ENCODE measurements at regions of chr13 and their contacts with region 1.

Region 1: DNA sequence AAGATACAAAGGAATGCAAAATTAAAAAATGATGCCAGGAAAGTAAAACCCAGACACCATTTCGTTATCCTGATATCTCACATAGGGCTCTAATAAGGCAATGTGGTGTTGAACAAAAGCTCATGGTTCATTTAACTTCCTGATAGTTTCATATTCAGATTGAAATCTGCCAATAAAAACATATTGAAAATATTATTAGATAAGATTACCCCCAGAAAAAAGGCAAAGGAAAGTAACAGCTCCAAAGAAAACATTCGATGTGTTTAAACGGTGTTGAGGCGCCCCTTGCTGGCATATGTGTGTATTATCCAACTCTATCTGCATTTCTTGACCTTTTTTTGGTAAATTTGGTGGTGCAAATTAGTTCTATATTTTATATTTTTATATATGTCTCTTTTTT is 75.9 kb downstream of the ESD start:
- DNase-seq: peak; percentile 65
- H3K4me3 ChIP-seq: no peak overlapping the region
- H3K27ac ChIP-seq: no peak overlapping the region
- H3K4me1 ChIP-seq: no peaks in the 10 kb centered on the region
- H3K27me3 ChIP-seq: no peaks in the 10 kb centered on the region
- CTCF ChIP-seq: peak; percentile 58 to 69 (median 59)
- POLR2A ChIP-seq: no peak

Region 2: DNA sequence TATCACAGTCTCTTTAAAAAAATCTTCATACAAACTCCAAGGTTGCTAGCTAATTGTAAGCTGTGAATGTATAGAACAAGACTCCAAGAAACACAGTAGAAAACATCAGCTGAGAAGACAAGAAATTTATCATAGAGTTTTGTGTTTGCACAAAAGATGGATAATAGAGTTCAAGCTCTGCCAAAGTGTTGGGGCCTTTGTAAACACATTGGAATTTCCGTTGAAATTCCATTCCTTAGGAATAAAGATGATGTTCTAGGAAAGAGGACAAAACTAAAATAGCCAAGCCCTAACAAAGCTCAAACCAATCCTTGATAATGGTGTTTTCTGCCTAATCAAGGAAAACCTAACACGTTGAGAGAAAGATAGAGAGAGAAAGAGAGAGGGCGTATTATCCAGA is 488.8 kb before region 1 on chr13:
- intact Hi-C with region 1: no loop called
- DNase-seq: no peak
- H3K4me3 ChIP-seq: no peak overlapping the region
- H3K27ac ChIP-seq: no peak overlapping the region
- H3K4me1 ChIP-seq: no peaks in the 10 kb centered on the region
- H3K27me3 ChIP-seq: no peaks in the 10 kb centered on the region
- CTCF ChIP-seq: no peak
- POLR2A ChIP-seq: no peak

Region 3: DNA sequence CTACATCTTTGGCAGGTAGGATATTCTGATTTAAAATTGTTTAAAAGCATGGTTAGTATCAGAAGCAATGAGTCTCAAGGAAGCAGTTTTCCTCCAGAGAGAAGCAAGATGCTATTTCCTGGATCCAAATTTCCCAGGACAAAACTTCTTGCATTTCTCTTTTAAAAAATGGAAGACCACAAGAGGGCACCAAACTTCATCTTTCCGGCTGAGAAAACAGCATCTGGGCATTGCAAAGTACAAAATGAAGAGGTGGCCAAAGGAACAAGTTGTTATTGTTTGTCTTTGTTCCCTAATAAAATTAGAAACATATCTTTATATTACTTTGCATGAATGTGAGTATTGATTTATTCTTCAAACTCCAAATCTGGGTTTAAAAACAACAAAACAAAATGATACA is 228.1 kb before region 1 on chr13:
- intact Hi-C with region 1: loop called (anchors 10 kb)
- DNase-seq: no peak
- H3K4me3 ChIP-seq: no peak overlapping the region
- H3K27ac ChIP-seq: no peak overlapping the region
- H3K4me1 ChIP-seq: no peaks in the 10 kb centered on the region
- H3K27me3 ChIP-seq: no peaks in the 10 kb centered on the region
- CTCF ChIP-seq: peak; percentile 45 to 65 (median 54)
- POLR2A ChIP-seq: no peak

Region 4: DNA sequence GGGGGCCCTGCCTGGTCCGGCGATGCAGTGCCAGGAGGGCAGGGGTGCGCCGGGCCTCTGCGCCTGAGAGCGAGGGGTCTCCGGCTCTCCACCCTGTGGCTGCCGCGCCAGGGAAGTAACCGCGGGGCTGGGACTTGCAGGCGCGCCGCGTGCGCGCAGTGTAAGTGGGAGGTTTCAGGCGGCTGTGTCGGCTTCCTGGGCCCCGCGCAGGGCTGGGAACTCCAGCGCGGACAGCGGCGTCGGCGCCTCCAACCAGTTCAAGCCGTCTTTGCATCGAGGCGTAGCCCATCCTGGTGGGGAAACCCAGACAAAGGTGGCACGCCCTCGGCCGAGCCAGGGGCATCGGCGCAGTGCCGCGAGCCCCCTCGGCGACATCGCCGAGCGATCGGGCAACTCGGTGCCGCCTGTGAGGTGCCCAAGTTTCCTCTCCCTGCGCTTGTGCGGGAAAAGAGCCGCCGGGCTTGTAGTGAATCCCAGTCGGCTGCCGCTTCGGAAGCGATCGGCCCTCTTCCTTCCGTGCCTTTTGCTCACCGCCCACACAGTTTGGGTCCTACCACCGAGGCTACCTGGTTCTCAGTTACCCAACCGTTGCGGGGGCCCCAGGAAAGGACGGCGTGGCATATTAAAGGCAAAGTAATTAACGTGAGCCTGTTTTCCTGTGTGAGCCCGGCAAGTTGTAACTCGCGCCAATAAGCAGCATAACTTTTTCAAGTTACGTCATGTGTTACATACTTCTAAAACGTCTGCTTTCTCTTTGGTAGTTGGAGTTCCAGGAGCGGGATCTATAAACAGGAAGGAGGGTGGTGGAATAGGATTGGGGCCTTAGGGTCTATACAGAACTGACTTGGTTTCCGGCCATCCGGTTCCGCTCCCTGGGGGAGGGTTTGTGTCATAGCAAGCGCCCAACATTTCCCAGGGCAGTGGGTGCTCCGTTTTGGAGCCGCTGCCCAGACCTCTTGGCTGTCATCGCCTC is 166.9 kb before region 1 on chr13:
- intact Hi-C with region 1: loop called (anchors 5 kb)
- DNase-seq: peak; percentile 81
- H3K4me3 ChIP-seq: peak overlapping the region; percentile 81 to 89
- H3K27ac ChIP-seq: peak overlapping the region; percentile 87 to 92
- H3K4me1 ChIP-seq: peaks cover 12% of the 10 kb centered on the region
- H3K27me3 ChIP-seq: no peaks in the 10 kb centered on the region
- CTCF ChIP-seq: peak; percentile 14 to 16 (median 14)
- POLR2A ChIP-seq: no peak

Region 5: GRCh38 chr13:47332149-47332548 is 611.1 kb after region 1 on chr13:
- intact Hi-C with region 1: no loop called
- DNase-seq: no peak
- H3K4me3 ChIP-seq: no peak overlapping the region
- H3K27ac ChIP-seq: no peak overlapping the region
- H3K4me1 ChIP-seq: no peaks in the 10 kb centered on the region
- H3K27me3 ChIP-seq: no peaks in the 10 kb centered on the region
- CTCF ChIP-seq: no peak
- POLR2A ChIP-seq: no peak

Region 6: GRCh38 chr13:47628666-47629065 is 907.6 kb after region 1 on chr13:
- intact Hi-C with region 1: no loop called
- DNase-seq: no peak
- H3K4me3 ChIP-seq: no peak overlapping the region
- H3K27ac ChIP-seq: no peak overlapping the region
- H3K4me1 ChIP-seq: no peaks in the 10 kb centered on the region
- H3K27me3 ChIP-seq: no peaks in the 10 kb centered on the region
- CTCF ChIP-seq: no peak
- POLR2A ChIP-seq: no peak